ENCODE measurements at regions of chr4 and their contacts with region 1.

Region 1: GRCh38 chr4:77240469-77241066 is 83.6 kb downstream of the CCNG2 start:
- DNase-seq: peak; percentile 69
- H3K4me3 Mint-ChIP-seq: no peak overlapping the region
- H3K27ac Mint-ChIP-seq: no peak overlapping the region
- H3K4me1 Mint-ChIP-seq: no peaks in the 10 kb centered on the region
- H3K27me3 Mint-ChIP-seq: peaks cover 23% of the 10 kb centered on the region
- CTCF ChIP-seq: peak; percentile 86

Region 2: GRCh38 chr4:77251751-77252150 is 11.2 kb after region 1 on chr4:
- CTCF ChIA-PET with region 1: interaction called, 19 read pairs
- POLR2A ChIA-PET with region 1: no interaction called
- intact Hi-C with region 1: no loop called
- DNase-seq: no peak
- H3K4me3 Mint-ChIP-seq: no peak overlapping the region
- H3K27ac Mint-ChIP-seq: no peak overlapping the region
- H3K4me1 Mint-ChIP-seq: peaks cover 6% of the 10 kb centered on the region
- H3K27me3 Mint-ChIP-seq: no peaks in the 10 kb centered on the region
- CTCF ChIP-seq: no peak

Region 3: GRCh38 chr4:77269161-77269904 is 28.8 kb after region 1 on chr4:
- CTCF ChIA-PET with region 1: interaction called, 31 read pairs
- POLR2A ChIA-PET with region 1: no interaction called
- intact Hi-C with region 1: no loop called
- DNase-seq: no peak
- H3K4me3 Mint-ChIP-seq: no peak overlapping the region
- H3K27ac Mint-ChIP-seq: no peak overlapping the region
- H3K4me1 Mint-ChIP-seq: no peaks in the 10 kb centered on the region
- H3K27me3 Mint-ChIP-seq: no peaks in the 10 kb centered on the region
- CTCF ChIP-seq: no peak

Region 4: DNA sequence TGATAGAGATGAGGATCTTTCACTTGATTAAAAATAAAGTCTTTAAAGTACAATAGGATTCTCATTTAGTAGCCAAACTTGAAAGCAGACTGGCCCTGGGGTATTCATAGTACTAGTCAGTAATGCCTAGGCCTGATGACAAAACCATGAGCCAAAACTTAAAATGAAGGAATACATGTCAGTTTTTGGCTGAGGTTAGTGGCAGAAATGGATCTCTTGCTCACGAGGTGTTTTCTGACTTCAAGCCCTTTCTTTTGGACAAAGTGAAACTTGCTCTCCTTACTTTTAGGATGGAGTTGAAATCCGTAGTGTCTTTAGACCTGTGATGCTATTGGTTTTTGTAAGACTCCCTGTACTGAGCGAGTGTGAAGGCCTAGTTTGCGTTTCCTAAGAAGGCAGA is 74.1 kb after region 1 on chr4:
- CTCF ChIA-PET with region 1: interaction called, 243 read pairs
- POLR2A ChIA-PET with region 1: interaction called, 8 read pairs
- intact Hi-C with region 1: loop called (anchors 1 kb)
- DNase-seq: no peak
- H3K4me3 Mint-ChIP-seq: no peak overlapping the region
- H3K27ac Mint-ChIP-seq: no peak overlapping the region
- H3K4me1 Mint-ChIP-seq: peaks cover 7% of the 10 kb centered on the region
- H3K27me3 Mint-ChIP-seq: no peaks in the 10 kb centered on the region
- CTCF ChIP-seq: no peak

Region 5: DNA sequence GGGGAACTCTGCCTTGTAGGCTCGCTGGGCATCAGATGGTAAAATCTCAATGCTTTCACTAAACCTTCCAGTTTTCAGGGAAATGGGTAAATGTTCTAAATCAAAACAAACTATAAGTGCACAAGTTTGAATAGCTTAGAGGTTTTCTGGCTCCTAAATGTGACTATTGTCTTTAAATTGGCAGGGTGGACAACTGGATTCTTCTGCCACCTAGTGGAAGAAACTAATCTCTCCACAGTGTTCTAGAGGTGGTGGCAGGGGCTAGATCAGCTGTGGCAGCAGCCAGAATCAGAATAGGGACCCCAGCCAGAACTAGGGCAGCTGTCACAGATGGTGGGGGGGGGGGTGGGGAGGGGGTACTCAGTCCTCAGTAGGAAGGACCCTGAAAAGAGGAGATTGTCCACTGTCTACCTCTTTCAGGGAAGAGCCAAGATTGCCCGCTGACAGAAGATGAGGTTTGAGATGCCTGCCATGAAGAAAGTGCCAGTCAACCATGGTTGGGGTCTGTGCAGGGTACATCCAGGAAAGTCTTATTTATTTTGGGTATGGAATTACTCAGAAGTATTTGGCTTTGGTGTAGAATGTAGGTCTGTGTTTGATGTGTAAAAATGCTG is 117.9 kb after region 1 on chr4:
- CTCF ChIA-PET with region 1: interaction called, 420 read pairs
- POLR2A ChIA-PET with region 1: interaction called, 4 read pairs
- intact Hi-C with region 1: loop called (anchors 1 kb)
- DNase-seq: peak; percentile 59
- H3K4me3 Mint-ChIP-seq: no peak overlapping the region
- H3K27ac Mint-ChIP-seq: no peak overlapping the region
- H3K4me1 Mint-ChIP-seq: peaks cover 6% of the 10 kb centered on the region
- H3K27me3 Mint-ChIP-seq: no peaks in the 10 kb centered on the region
- CTCF ChIP-seq: peak; percentile 64